SK-N-SH (cell line): ENCODE measurements at regions of chr9 and their contacts with region 1.

Region 1: GRCh38 chr9:35903049-35903448 is 3.0 kb upstream of the HRCT1 start:
- DNase-seq: peak; percentile 72
- H3K4me3 ChIP-seq: peak overlapping the region in 1 of 2 experiments; percentile 3; a peak in 1 of 4 replicates
- H3K27ac ChIP-seq: no peak overlapping the region
- H3K4me1 ChIP-seq: peaks cover 30% of the 10 kb centered on the region in 2 experiments; a peak in 3 of 4 replicates
- H3K27me3 ChIP-seq: no peaks in the 10 kb centered on the region
- CTCF ChIP-seq: peak; percentile 81
- EP300 ChIP-seq: no peak
- RAD21 ChIP-seq: peak; percentile 80

Region 2: GRCh38 chr9:35859310-35859989 is 43.6 kb before region 1 on chr9:
- CTCF ChIA-PET with region 1: no interaction called
- POLR2A ChIA-PET with region 1: no interaction called
- DNase-seq: peak; percentile 51
- H3K4me3 ChIP-seq: no peak overlapping the region
- H3K27ac ChIP-seq: no peak overlapping the region
- H3K4me1 ChIP-seq: peaks cover 0 to 9% of the 10 kb centered on the region in 2 experiments; a peak in 1 of 4 replicates
- H3K27me3 ChIP-seq: no peaks in the 10 kb centered on the region; the same call in 1 of the 2 replicates
- CTCF ChIP-seq: no peak
- EP300 ChIP-seq: no peak
- RAD21 ChIP-seq: no peak

Region 3: GRCh38 chr9:35891646-35892045 is 11.4 kb before region 1 on chr9:
- CTCF ChIA-PET with region 1: interaction called, 19 read pairs
- POLR2A ChIA-PET with region 1: no interaction called
- DNase-seq: no peak
- H3K4me3 ChIP-seq: no peak overlapping the region
- H3K27ac ChIP-seq: no peak overlapping the region
- H3K4me1 ChIP-seq: no peaks in the 10 kb centered on the region
- H3K27me3 ChIP-seq: 0 out of 2 replicates have a peak, but pooled peaks cover 8% of the 10 kb centered on the region
- CTCF ChIP-seq: no peak
- EP300 ChIP-seq: no peak
- RAD21 ChIP-seq: no peak

Region 4: GRCh38 chr9:35923927-35924763 is 21.1 kb after region 1 on chr9:
- CTCF ChIA-PET with region 1: interaction called, 19 read pairs
- POLR2A ChIA-PET with region 1: no interaction called
- DNase-seq: no peak
- H3K4me3 ChIP-seq: peak overlapping the region in 1 of 2 experiments; percentile 41; a peak in 2 of 4 replicates
- H3K27ac ChIP-seq: peak overlapping the region; percentile 81 to 97; a peak in 3 of 4 replicates
- H3K4me1 ChIP-seq: peaks cover 0 to 24% of the 10 kb centered on the region in 2 experiments; a peak in 2 of 4 replicates
- H3K27me3 ChIP-seq: no peaks in the 10 kb centered on the region
- CTCF ChIP-seq: no peak
- EP300 ChIP-seq: peak in 1 of 2 experiments; percentile 67; a peak in 1 of 4 replicates
- RAD21 ChIP-seq: no peak

Region 5: GRCh38 chr9:36023260-36024048 is 120.4 kb after region 1 on chr9:
- CTCF ChIA-PET with region 1: interaction called, 43 read pairs
- POLR2A ChIA-PET with region 1: no interaction called
- DNase-seq: peak; percentile 68
- H3K4me3 ChIP-seq: no peak overlapping the region
- H3K27ac ChIP-seq: no peak overlapping the region
- H3K4me1 ChIP-seq: peaks cover 0 to 7% of the 10 kb centered on the region in 2 experiments; a peak in 2 of 4 replicates
- H3K27me3 ChIP-seq: no peaks in the 10 kb centered on the region
- CTCF ChIP-seq: peak; percentile 93
- EP300 ChIP-seq: no peak
- RAD21 ChIP-seq: peak; percentile 88